ENCODE measurements at regions of chr10 and their contacts with region 1.

Region 1: GRCh38 chr10:126387023-126387921 is 1.0 kb downstream of the ADAM12 start:
- DNase-seq: peak; percentile 50 to 79
- H3K4me3 ChIP-seq: peak overlapping the region; percentile 78
- H3K27ac ChIP-seq: peak overlapping the region; percentile 28; the same call in 1 of the 2 replicates
- H3K4me1 ChIP-seq: peaks cover 8% of the 10 kb centered on the region; the same call in 1 of the 2 replicates
- H3K27me3 ChIP-seq: no peaks in the 10 kb centered on the region
- CTCF ChIP-seq: peak; percentile 79

Region 2: DNA sequence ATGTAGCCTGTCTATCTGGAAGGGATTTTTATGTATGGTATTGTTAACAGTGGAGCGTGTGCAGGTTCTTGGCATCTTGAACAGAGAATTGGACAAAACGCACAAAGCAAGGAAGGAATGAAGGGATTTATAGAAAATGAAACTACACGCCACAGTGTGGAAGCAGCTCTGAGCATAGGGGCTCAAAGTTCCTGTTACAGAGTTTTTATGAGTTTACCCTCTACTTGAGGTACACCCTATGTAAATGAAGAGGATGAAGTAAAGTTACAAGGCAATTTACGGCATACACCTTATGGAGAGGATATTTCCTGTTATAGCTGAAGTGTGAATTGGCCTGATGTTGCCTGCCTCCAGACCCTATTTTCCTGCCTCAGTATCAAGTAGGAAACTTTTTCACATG is 457.7 kb before region 1 on chr10:
- CTCF ChIA-PET with region 1: no interaction called
- POLR2A ChIA-PET with region 1: no interaction called
- intact Hi-C with region 1: loop called (anchors 5 kb)
- DNase-seq: no peak
- H3K4me3 ChIP-seq: no peak overlapping the region
- H3K27ac ChIP-seq: no peak overlapping the region
- H3K4me1 ChIP-seq: peaks cover 7% of the 10 kb centered on the region; the same call in 1 of the 2 replicates
- H3K27me3 ChIP-seq: no peaks in the 10 kb centered on the region
- CTCF ChIP-seq: no peak

Region 3: GRCh38 chr10:126062131-126062981 is 324.9 kb before region 1 on chr10:
- CTCF ChIA-PET with region 1: no interaction called
- POLR2A ChIA-PET with region 1: no interaction called
- intact Hi-C with region 1: loop called (anchors 2 kb)
- DNase-seq: peak; percentile 73 to 86
- H3K4me3 ChIP-seq: no peak overlapping the region
- H3K27ac ChIP-seq: peak overlapping the region; percentile 90
- H3K4me1 ChIP-seq: peaks cover 59% of the 10 kb centered on the region
- H3K27me3 ChIP-seq: no peaks in the 10 kb centered on the region
- CTCF ChIP-seq: no peak

Region 4: GRCh38 chr10:126199221-126199998 is 187.9 kb before region 1 on chr10:
- CTCF ChIA-PET with region 1: interaction called, 4 read pairs
- POLR2A ChIA-PET with region 1: no interaction called
- intact Hi-C with region 1: loop called (anchors 2 kb)
- DNase-seq: peak; percentile 72 to 75
- H3K4me3 ChIP-seq: no peak overlapping the region
- H3K27ac ChIP-seq: peak overlapping the region; percentile 79
- H3K4me1 ChIP-seq: peaks cover 35% of the 10 kb centered on the region
- H3K27me3 ChIP-seq: no peaks in the 10 kb centered on the region
- CTCF ChIP-seq: no peak

Region 5: GRCh38 chr10:126407846-126408245 is 20.6 kb after region 1 on chr10:
- CTCF ChIA-PET with region 1: no interaction called
- POLR2A ChIA-PET with region 1: interaction called, 11 read pairs
- intact Hi-C with region 1: no loop called
- DNase-seq: no peak
- H3K4me3 ChIP-seq: no peak overlapping the region
- H3K27ac ChIP-seq: no peak overlapping the region
- H3K4me1 ChIP-seq: no peaks in the 10 kb centered on the region
- H3K27me3 ChIP-seq: no peaks in the 10 kb centered on the region
- CTCF ChIP-seq: no peak

Region 6: DNA sequence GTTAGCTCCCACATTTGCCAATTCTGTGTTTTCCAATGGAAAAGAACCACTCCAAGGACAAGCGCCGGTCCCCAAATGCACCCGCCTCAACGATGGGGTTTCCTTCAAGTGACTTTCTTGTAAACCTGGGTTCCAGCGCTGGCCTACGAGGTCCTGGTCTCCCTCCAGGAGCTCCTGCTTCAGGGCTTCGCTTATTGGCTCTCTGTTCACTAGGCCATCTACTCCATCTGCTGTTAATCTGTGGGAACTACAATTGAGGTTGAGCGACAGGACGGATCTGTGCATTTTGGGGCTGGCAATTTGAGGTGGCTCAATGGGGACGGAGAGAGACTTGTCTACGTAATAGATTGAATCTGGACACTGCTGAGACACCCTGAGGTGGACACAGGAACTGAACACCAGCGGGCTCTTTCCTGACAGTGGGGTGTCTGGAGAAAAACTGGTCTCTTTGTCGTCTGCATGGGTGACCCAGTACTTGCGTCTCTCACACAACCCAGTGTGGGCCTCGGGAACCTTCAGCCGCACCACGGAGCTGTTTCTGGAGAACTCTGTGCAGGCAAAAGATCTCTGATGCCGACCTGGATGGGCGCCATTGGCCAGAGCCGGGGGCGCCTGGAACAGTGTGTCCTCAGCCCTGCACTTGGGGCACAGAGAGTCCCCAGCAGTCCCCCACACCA is 116.9 kb after region 1 on chr10:
- CTCF ChIA-PET with region 1: interaction called, 3 read pairs
- POLR2A ChIA-PET with region 1: no interaction called
- intact Hi-C with region 1: loop called (anchors 1 kb)
- DNase-seq: peak; percentile 23 to 44
- H3K4me3 ChIP-seq: no peak overlapping the region
- H3K27ac ChIP-seq: no peak overlapping the region
- H3K4me1 ChIP-seq: 0 out of 2 replicates have a peak, but pooled peaks cover 3% of the 10 kb centered on the region
- H3K27me3 ChIP-seq: no peaks in the 10 kb centered on the region
- CTCF ChIP-seq: peak; percentile 81